Transverse colon (tissue), 4 donors: ENCODE measurements at regions of chr13 and their contacts with region 1.

Region 1: GRCh38 chr13:20174656-20175405 is 14.0 kb upstream of the GJA3 start:
- DNase-seq: peak; percentile 85
- H3K4me3 ChIP-seq: peak overlapping the region in 1 of 4 donors; percentile 8
- H3K27ac ChIP-seq: peak overlapping the region in 1 of 4 donors; percentile 42
- H3K4me1 ChIP-seq: peaks cover 0 to 11% (median 5%) of the 10 kb centered on the region in 4 donors
- H3K27me3 ChIP-seq: peaks cover 39% of the 10 kb centered on the region
- CTCF ChIP-seq: no peak
- EP300 ChIP-seq: no peak
- POLR2A ChIP-seq: no peak

Region 2: GRCh38 chr13:19927117-19927748 is 247.6 kb before region 1 on chr13:
- in situ Hi-C with region 1: loop called in 1 of 4 experiments (anchors 25 kb)
- intact Hi-C with region 1: no loop called
- DNase-seq: no peak
- H3K4me3 ChIP-seq: no peak overlapping the region
- H3K27ac ChIP-seq: no peak overlapping the region
- H3K4me1 ChIP-seq: no peaks in the 10 kb centered on the region
- H3K27me3 ChIP-seq: no peaks in the 10 kb centered on the region
- CTCF ChIP-seq: peak; percentile 52 to 59 (median 54)
- EP300 ChIP-seq: no peak
- POLR2A ChIP-seq: no peak

Region 3: DNA sequence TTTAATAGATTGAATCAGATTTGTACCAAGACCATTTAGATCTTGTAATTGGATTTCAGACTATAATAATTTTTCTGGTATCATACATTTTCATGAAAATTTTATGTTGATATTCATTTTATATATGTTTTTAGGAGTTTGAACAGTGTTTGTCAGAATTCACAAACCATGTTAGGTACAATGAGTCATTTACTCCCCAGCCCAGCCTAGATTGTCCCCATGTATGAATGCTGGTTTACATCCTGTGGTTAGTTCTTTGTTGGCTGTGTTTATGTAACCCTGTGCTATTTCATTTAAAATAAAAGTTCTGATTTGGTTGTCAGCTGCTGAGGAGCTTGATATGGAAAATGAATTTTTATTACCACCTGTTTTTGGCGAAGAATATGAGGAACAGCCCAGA is 110.7 kb before region 1 on chr13:
- in situ Hi-C with region 1: no loop called
- intact Hi-C with region 1: loop called (anchors 1 kb)
- DNase-seq: no peak
- H3K4me3 ChIP-seq: no peak overlapping the region
- H3K27ac ChIP-seq: no peak overlapping the region
- H3K4me1 ChIP-seq: no peaks in the 10 kb centered on the region
- H3K27me3 ChIP-seq: no peaks in the 10 kb centered on the region
- CTCF ChIP-seq: no peak
- EP300 ChIP-seq: no peak
- POLR2A ChIP-seq: no peak

Region 4: DNA sequence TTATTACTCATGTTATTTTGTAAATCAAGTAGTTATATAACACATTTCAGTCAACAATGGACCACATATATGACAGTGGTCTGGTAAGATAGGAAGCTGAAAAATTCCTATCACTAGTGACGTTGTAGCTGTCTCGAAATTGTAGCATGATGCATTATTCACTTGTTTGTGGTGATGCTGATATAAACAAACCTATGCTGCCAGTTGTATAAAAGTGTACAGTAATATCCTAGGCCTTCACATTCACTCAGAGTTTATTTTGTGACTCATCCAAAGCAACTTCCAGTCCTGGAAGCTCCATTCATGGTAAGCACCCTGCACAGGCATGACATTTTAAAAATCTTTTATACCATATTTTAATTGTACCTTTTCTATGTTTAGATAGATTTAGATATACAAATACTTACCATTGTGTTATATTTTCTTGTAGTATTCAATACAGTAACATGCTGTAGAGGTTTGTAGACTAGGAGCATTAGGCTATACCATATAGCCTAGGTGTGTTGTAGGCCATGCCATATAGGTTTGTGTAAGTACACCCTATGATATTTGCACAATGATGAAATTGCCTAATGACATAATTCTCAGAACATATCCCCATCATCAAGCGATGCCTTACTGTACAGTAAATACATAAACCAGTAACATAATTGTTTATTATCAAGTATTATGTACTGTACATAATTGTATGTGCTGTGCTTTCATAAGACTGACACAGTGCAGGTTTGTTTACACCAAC is 441.4 kb after region 1 on chr13:
- in situ Hi-C with region 1: no loop called
- intact Hi-C with region 1: no loop called
- DNase-seq: no peak
- H3K4me3 ChIP-seq: no peak overlapping the region
- H3K27ac ChIP-seq: no peak overlapping the region
- H3K4me1 ChIP-seq: no peaks in the 10 kb centered on the region
- H3K27me3 ChIP-seq: no peaks in the 10 kb centered on the region
- CTCF ChIP-seq: no peak
- EP300 ChIP-seq: no peak
- POLR2A ChIP-seq: no peak